Mammary epithelial cell (primary cell): ENCODE measurements at regions of chr5 and their contacts with region 1.

Region 1: DNA sequence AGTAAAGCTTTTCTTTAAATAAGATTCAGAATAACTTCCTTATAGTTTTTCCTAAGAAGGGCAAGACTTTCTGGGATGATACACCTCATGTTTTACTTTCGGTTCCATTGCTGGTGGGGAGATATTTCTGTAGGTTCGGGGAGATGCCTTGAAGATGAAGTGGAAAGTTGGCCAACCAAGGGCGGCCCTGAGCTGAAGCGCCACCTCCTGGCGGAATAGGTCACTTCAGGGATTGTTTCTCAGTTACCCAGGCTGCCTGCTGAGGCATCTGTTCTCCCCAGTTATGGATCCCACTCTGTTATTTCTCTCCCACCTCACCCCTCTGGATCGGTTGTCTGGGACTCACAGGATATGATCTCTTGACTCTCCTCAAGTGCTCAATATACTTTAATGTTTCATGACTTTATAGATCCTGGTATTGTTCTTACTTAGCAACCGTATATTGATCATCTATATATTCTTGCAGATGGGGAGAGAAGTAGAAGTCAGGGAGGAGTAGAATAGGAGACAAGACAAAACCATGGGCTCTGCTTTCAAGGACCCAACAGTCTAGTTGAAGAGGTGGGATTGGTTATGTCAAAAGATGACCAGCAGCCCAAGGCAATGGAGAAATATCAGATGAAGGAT is 23.4 kb downstream of the MEGF10 start:
- DNase-seq: peak; percentile 39
- H3K4me3 ChIP-seq: no peak overlapping the region
- H3K27ac ChIP-seq: no peak overlapping the region
- H3K4me1 ChIP-seq: no peaks in the 10 kb centered on the region
- H3K27me3 ChIP-seq: peaks cover 6% of the 10 kb centered on the region
- CTCF ChIP-seq: peak; percentile 75 to 91

Region 2: GRCh38 chr5:126656396-126657007 is 657.5 kb before region 1 on chr5:
- CTCF ChIA-PET with region 1: no interaction called
- dilution Hi-C with region 1: no loop called
- in situ Hi-C with region 1: no loop called
- intact Hi-C with region 1: loop called (anchors 1 kb)
- DNase-seq: no peak
- H3K4me3 ChIP-seq: no peak overlapping the region
- H3K27ac ChIP-seq: no peak overlapping the region
- H3K4me1 ChIP-seq: no peaks in the 10 kb centered on the region
- H3K27me3 ChIP-seq: no peaks in the 10 kb centered on the region
- CTCF ChIP-seq: peak; percentile 87 to 88

Region 3: GRCh38 chr5:126837906-126838539 is 475.9 kb before region 1 on chr5:
- CTCF ChIA-PET with region 1: no interaction called
- dilution Hi-C with region 1: no loop called
- in situ Hi-C with region 1: no loop called
- intact Hi-C with region 1: loop called (anchors 2 kb)
- DNase-seq: no peak
- H3K4me3 ChIP-seq: no peak overlapping the region
- H3K27ac ChIP-seq: no peak overlapping the region
- H3K4me1 ChIP-seq: no peaks in the 10 kb centered on the region
- H3K27me3 ChIP-seq: no peaks in the 10 kb centered on the region
- CTCF ChIP-seq: peak in 1 of 2 donors; percentile 37

Region 4: DNA sequence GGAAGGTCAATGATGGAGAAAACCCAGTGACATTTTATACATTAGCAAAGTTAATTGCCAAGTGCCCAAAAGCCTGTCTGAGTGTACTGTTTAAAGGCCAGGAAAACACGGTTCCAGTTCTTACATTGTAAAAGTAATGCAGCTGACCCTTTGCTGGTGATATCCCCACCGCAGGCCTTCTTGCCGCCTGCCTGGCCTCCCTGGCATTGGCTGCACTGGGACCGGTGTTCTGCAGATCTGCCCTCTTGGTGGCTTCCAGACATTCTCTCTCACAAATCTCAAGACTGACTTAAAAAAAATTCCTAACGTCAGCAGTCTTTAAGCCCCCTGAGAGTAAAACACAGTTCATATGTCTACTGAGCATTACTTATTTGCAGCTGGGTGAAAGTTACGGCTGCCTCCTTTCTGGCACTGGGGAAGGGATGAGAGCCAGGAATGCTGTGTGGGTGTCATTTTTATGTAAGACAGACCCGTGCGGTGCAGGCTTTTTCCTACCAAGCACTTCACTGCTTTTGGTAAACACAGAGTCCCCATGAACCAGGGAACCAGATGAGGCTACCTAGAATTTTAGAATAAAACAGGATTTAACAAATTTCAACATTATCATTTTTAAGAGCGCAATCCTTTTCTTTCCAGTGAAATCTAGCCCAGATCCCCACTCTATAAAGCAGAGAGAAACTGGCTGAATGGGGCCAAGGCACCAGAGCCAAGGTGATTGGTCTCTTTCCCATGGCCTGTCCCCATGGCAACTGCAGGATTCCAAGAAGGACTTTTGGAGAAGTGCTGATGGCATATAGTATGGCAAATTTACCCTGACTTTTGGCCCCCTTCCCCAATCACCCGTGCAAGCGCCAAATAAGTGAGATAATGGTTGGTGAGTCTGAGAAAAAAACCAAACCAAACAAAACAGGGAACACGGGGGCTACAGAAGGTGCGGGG is 456.2 kb before region 1 on chr5:
- CTCF ChIA-PET with region 1: no interaction called
- dilution Hi-C with region 1: no loop called
- in situ Hi-C with region 1: no loop called
- intact Hi-C with region 1: loop called (anchors 5 kb)
- DNase-seq: no peak
- H3K4me3 ChIP-seq: no peak overlapping the region
- H3K27ac ChIP-seq: no peak overlapping the region
- H3K4me1 ChIP-seq: peaks cover 5% of the 10 kb centered on the region
- H3K27me3 ChIP-seq: no peaks in the 10 kb centered on the region
- CTCF ChIP-seq: no peak

Region 5: DNA sequence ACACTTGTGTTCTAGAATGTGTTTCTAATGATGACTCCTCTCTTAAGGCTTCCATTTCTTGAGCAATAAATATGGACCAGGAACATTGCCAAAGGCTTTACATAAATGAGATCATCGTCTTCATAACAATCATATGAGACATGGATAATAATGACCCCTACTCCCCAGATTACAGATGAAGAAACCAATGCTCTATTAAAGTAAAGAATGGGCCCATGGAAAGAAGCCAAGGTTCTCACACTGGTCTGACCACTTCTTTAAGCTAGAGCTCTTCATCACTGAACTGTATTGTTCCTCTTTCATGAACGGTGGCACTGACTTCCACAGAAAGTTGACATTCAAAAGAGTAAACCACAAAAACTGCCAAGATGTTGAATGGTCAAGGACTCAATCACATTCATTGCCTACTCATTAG is 348.9 kb before region 1 on chr5:
- CTCF ChIA-PET with region 1: no interaction called
- dilution Hi-C with region 1: no loop called
- in situ Hi-C with region 1: no loop called
- intact Hi-C with region 1: loop called (anchors 5 kb)
- DNase-seq: peak; percentile 86
- H3K4me3 ChIP-seq: no peak overlapping the region
- H3K27ac ChIP-seq: no peak overlapping the region
- H3K4me1 ChIP-seq: peaks cover 10% of the 10 kb centered on the region
- H3K27me3 ChIP-seq: no peaks in the 10 kb centered on the region
- CTCF ChIP-seq: no peak

Region 6: DNA sequence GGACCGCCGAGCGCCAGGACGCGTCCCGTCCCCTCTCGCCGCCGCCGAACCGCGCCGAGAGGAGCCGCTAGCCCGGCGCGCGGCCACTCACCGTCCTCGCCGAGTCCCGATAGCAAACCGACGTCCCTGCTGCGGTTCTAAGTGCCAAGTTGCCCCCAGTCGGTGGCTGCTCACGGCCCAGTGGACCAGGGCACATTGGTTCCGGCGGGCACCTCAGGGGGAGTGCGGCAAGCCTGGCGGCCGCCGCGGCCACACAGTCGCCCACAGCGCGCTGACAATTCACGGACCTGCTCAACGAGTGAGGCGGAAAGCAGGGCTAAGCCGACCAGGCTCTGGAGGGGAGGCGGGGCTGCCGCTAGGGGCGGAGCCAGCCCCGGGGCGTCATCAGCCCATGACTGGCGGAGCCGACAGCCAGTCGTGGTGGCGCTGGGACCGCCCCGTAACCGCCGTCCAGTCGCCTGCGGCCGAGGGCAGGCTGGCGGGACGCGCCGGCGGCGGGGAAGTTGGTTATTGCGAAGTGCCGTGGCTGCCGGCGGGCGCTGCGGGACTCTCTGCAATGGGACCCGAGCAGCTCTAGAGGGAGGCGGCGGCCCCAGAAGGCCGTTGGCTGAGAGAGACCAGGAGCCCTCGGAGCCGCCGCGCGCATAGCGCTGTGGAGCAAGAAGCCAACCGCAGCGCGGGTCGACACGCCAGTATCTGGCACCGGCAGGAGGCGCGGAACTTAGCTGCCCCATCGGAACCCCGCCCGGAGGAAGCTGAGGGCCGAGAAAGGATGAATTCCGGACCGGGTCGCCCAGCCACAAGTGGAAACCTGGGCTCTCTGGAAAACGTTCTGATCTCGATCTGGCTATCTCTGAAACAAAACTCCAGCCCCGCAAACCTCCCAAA is 283.5 kb before region 1 on chr5 and contains the start of gene MARCHF3:
- CTCF ChIA-PET with region 1: no interaction called
- dilution Hi-C with region 1: no loop called
- in situ Hi-C with region 1: no loop called
- intact Hi-C with region 1: loop called (anchors 1 kb)
- DNase-seq: peak; percentile 96
- H3K4me3 ChIP-seq: peak within 1 kb of the TSS; percentile 63 to 98 (median 80)
- H3K27ac ChIP-seq: peak within 1 kb of the TSS; percentile 44
- H3K4me1 ChIP-seq: peaks cover 12% of the 10 kb centered on the region
- H3K27me3 ChIP-seq: no peaks in the 10 kb centered on the region
- CTCF ChIP-seq: peak in 1 of 2 donors; percentile 42
- total RNA-seq, gene MARCHF3: 4.0 to 5.0 TPM

Region 7: GRCh38 chr5:127290019-127290945 is 23.7 kb before region 1 on chr5 and contains the start of gene MEGF10:
- CTCF ChIA-PET with region 1: no interaction called
- dilution Hi-C with region 1: no loop called
- in situ Hi-C with region 1: no loop called
- intact Hi-C with region 1: loop called (anchors 1 kb)
- DNase-seq: peak; percentile 46
- H3K4me3 ChIP-seq: peak within 1 kb of the TSS in 2 of 3 experiments; percentile 17 to 19
- H3K27ac ChIP-seq: no peak within 1 kb of the TSS
- H3K4me1 ChIP-seq: peaks cover 7% of the 10 kb centered on the region
- H3K27me3 ChIP-seq: peaks cover 14% of the 10 kb centered on the region
- CTCF ChIP-seq: peak; percentile 57 to 86
- total RNA-seq, gene MEGF10: 0.40 to 2.2 TPM